Activated B cell treated with CpG ODN at 0.5 μM for 24 hours (primary cell): ENCODE measurements at regions of chr14 and their contacts with region 1.

Region 1: DNA sequence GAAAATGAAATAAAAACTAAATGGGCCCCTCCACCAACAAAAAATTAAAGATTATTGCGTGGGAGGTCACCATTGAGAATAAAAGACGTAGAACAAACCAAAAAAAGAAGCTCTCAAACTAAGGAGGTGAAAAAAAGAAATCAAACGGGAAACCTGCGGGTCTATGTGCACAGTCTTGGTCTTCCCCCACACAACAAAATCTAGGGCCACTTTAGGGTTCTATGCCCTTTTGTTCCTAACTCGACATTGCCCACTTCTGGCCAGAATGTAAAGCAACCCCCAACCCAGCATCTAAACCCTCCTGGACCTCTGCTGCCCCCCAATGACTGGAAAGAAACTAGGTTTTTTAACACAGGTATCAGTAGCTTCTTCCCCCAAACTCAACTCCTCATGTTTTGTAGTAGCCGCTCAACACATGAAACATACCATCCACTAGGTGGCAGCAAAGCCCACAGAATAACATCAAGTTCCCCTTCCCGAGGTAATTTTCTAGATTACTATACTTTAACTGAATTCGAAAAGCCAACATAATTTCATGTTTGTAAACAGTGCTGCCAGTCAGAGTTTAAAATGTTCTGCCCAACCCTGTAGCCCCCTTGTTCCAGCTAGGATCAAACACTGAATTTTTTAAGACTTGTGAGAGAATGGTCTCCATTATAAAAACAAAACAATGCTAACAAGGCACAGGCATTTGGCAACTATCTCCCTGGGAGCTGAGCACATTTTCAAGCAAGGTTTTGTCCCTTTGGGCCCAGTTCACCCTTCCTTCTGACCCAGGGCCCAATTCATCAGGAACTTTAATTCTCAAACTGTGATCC is 18.7 kb downstream of the DAD1 start:
- DNase-seq: peak; percentile 53
- ATAC-seq: peak; percentile 88
- H3K4me3 Mint-ChIP-seq: peak overlapping the region; percentile 74
- H3K27ac Mint-ChIP-seq: peak overlapping the region; percentile 94
- H3K4me1 Mint-ChIP-seq: peaks cover 53% of the 10 kb centered on the region
- H3K27me3 Mint-ChIP-seq: no peaks in the 10 kb centered on the region
- CTCF ChIP-seq: peak; percentile 76

Region 2: GRCh38 chr14:22386924-22387775 is 183.2 kb before region 1 on chr14:
- CTCF ChIA-PET with region 1: interaction called, 202 read pairs
- POLR2A ChIA-PET with region 1: interaction called, 19 read pairs
- intact Hi-C with region 1: loop called (anchors 1 kb)
- DNase-seq: peak; percentile 46
- ATAC-seq: peak; percentile 15
- H3K4me3 Mint-ChIP-seq: peak overlapping the region; percentile 24
- H3K27ac Mint-ChIP-seq: peak overlapping the region; percentile 98
- H3K4me1 Mint-ChIP-seq: peaks cover 78% of the 10 kb centered on the region
- H3K27me3 Mint-ChIP-seq: no peaks in the 10 kb centered on the region
- CTCF ChIP-seq: peak; percentile 18

Region 3: GRCh38 chr14:22497144-22497423 is 73.3 kb before region 1 on chr14:
- CTCF ChIA-PET with region 1: interaction called, 29 read pairs
- POLR2A ChIA-PET with region 1: interaction called, 4 read pairs
- intact Hi-C with region 1: loop called (anchors 1 kb)
- DNase-seq: no peak
- ATAC-seq: peak; percentile 23
- H3K4me3 Mint-ChIP-seq: peak overlapping the region; percentile 12
- H3K27ac Mint-ChIP-seq: peak overlapping the region; percentile 81
- H3K4me1 Mint-ChIP-seq: peaks cover 69% of the 10 kb centered on the region
- H3K27me3 Mint-ChIP-seq: no peaks in the 10 kb centered on the region
- CTCF ChIP-seq: no peak

Region 4: GRCh38 chr14:22598099-22598899 is 28.0 kb after region 1 on chr14 and contains the start of gene ABHD4:
- CTCF ChIA-PET with region 1: interaction called, 7 read pairs
- POLR2A ChIA-PET with region 1: no interaction called
- intact Hi-C with region 1: loop called (anchors 1 kb)
- DNase-seq: peak; percentile 71
- ATAC-seq: peak; percentile 90
- H3K4me3 Mint-ChIP-seq: peak within 1 kb of the TSS; percentile 95
- H3K27ac Mint-ChIP-seq: peak within 1 kb of the TSS; percentile 88
- H3K4me1 Mint-ChIP-seq: peaks cover 28% of the 10 kb centered on the region
- H3K27me3 Mint-ChIP-seq: peaks cover 2% of the 10 kb centered on the region
- CTCF ChIP-seq: no peak
- total RNA-seq, gene ABHD4: 12.1 and 13.0 TPM in 2 replicates

Region 5: DNA sequence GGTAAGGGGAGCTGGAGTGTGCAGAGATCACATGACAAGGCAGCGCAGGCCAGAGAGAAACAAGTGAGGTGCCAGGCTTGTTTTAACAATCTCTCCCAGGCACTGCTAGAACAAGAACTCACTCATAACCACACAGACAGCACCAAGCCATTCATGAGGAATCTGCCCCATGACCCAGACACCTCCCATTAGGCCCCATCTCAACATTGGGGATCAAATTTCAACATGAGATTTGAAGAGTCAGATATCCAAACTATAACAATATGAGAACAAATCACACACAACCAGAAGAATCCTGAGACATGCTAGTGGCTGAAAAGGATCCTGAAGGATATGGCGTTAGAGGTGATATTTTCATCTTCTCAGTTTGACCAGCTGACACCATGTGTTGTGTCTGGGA is 51.9 kb after region 1 on chr14:
- CTCF ChIA-PET with region 1: no interaction called
- POLR2A ChIA-PET with region 1: no interaction called
- intact Hi-C with region 1: no loop called
- DNase-seq: no peak
- ATAC-seq: no peak
- H3K4me3 Mint-ChIP-seq: no peak overlapping the region
- H3K27ac Mint-ChIP-seq: no peak overlapping the region
- H3K4me1 Mint-ChIP-seq: no peaks in the 10 kb centered on the region
- H3K27me3 Mint-ChIP-seq: no peaks in the 10 kb centered on the region
- CTCF ChIP-seq: no peak

Region 6: DNA sequence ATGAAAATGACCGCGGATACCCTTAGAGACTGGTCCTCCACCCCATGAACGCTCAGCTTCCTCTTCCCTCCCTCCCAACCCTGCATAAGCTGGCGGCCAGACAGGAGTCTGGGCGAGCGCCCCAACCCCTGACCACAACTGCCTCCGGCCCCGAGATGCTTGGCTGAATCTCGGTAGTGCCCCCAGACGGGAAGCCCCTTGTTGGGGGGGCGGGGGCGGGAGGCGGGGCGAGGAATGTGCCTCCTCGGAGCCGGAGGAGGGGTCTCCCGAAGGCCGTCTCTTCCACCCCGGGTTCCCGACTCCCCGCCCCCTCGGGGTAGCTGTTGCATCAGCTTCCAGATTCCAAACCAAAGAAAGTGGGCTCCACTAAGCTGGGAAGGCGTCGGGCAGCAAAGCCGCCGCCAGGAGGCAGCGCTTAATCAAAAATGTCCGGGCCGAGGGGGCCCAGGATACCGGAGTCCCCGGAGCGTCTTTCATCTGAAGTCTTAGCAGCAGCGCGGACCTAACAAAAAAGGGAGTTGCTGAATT is 252.3 kb after region 1 on chr14:
- CTCF ChIA-PET with region 1: interaction called, 16 read pairs
- POLR2A ChIA-PET with region 1: interaction called, 7 read pairs
- intact Hi-C with region 1: no loop called
- DNase-seq: peak; percentile 69
- ATAC-seq: peak; percentile 76
- H3K4me3 Mint-ChIP-seq: peak overlapping the region; percentile 86
- H3K27ac Mint-ChIP-seq: peak overlapping the region; percentile 92
- H3K4me1 Mint-ChIP-seq: peaks cover 60% of the 10 kb centered on the region
- H3K27me3 Mint-ChIP-seq: no peaks in the 10 kb centered on the region
- CTCF ChIP-seq: no peak

Region 7: DNA sequence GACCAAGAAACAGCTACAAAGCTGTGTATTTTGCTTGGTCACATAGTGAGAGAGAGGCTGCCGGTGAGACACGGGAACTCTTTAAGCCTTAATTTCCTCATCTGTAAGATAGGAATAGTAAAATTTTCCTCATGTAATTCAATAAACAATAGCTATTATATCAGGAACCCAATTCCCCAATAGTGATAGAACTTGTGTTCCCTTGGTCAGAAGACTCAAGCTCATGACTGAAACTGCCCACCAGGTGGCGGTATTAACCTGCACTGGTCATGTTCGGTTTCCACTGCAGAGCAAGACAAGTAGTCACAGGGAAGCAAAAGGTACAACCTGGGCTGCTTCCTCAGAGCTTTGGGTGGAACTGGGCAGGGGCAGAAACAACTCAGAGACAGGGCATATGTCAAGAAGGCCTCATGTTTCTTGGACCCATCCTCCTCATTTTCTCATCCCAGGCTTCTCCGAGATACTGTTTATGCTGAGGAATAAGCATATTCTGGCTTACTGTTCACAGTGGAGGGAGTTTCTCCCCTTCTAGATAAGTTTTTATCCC is 416.2 kb after region 1 on chr14:
- CTCF ChIA-PET with region 1: interaction called, 75 read pairs
- POLR2A ChIA-PET with region 1: interaction called, 4 read pairs
- intact Hi-C with region 1: loop called (anchors 1 kb)
- DNase-seq: peak; percentile 70
- ATAC-seq: peak; percentile 62
- H3K4me3 Mint-ChIP-seq: no peak overlapping the region
- H3K27ac Mint-ChIP-seq: no peak overlapping the region
- H3K4me1 Mint-ChIP-seq: no peaks in the 10 kb centered on the region
- H3K27me3 Mint-ChIP-seq: no peaks in the 10 kb centered on the region
- CTCF ChIP-seq: peak; percentile 91